ENCODE measurements at regions of chr10 and their contacts with region 1.

Region 1: GRCh38 chr10:13684252-13684791 is 97.6 kb downstream of the PRPF18 start:
- DNase-seq: peak in 1 of 2 donors; percentile 43
- ATAC-seq: peak; percentile 35 to 59
- H3K4me3 ChIP-seq: peak overlapping the region; percentile 6 to 19 (median 12)
- H3K27ac ChIP-seq: peak overlapping the region; percentile 58 to 71 (median 64)
- H3K4me1 ChIP-seq: peaks cover 37 to 40% of the 10 kb centered on the region in 2 donors
- H3K27me3 ChIP-seq: no peaks in the 10 kb centered on the region
- CTCF ChIP-seq: no peak
- POLR2A ChIP-seq: no peak

Region 2: DNA sequence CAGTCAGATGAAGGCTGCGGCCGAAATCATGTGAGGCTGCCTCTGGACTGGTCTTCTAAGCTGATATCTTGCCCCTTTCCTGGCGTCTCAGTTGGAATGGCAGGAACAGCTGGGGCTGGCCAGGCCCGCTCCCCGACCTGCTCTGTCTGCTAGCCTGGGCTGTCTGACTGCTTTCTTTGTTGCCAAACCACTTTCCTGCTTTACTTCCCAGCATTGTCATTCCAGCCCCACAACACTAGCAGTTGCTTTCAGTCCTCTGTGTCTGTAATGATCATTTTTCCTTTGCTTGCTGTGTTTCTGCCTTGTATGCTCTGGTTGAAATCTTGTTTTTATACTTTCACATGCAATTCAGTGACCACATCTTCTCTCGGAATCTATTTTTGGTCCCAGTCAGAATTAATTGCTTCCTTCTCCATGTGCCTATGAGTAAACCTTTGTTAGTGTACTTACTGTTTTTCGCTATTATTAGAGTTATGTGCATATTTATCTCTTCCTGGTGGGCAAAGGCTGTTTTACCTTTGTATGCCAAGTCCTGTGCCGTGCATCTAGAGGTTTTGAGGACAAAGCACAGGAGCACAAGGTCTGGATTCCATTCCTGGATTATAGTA is 76.0 kb before region 1 on chr10:
- in situ Hi-C with region 1: no loop called
- intact Hi-C with region 1: no loop called
- DNase-seq: peak in 1 of 2 donors; percentile 78
- ATAC-seq: peak; percentile 77 to 96
- H3K4me3 ChIP-seq: peak overlapping the region in 2 of 4 donors; percentile 1 to 2
- H3K27ac ChIP-seq: peak overlapping the region; percentile 63 to 83 (median 75)
- H3K4me1 ChIP-seq: peaks cover 16 to 25% of the 10 kb centered on the region in 2 donors
- H3K27me3 ChIP-seq: no peaks in the 10 kb centered on the region
- CTCF ChIP-seq: no peak
- POLR2A ChIP-seq: no peak

Region 3: DNA sequence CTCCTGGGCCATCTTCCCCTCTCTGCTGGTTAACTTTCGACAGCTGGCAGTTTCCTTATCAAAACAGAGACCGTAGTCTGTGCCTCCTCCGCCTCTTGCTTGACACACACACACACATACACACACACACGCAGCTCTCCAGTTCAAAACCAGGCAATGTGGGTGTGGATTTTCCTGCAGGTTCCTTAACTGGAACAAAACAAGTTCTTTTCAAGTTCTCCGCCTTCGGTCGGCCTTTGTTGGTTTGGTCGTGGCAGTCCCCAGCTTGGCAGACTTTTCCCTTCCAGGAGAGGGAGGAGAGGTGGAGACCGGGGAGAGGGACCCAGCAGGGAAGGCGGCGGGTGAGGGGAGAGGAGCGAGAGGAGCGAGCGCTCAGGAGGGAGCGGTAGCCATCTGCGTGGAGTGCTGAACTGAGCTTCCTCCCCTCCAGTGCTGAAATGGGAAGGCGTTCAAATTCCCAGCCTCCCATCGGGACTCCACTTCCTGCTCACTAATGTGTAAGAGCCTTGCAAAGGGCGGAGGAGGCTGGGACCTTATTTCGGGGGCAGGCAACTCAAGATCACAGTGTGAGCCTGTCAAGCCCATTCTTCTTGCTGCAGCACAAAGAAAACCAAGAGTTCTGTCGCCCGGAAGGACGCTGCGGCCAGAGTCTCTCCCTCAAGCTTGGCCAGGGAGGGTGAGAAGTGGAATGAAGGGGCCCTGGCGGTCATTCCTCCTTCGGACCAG is 23.0 kb after region 1 on chr10:
- in situ Hi-C with region 1: no loop called
- intact Hi-C with region 1: loop called (anchors 2 kb)
- DNase-seq: peak; percentile 59 to 71
- ATAC-seq: peak; percentile 83 to 93
- H3K4me3 ChIP-seq: peak overlapping the region; percentile 42 to 53 (median 48)
- H3K27ac ChIP-seq: peak overlapping the region; percentile 36 to 38 (median 37)
- H3K4me1 ChIP-seq: peaks cover 26 to 27% of the 10 kb centered on the region in 2 donors
- H3K27me3 ChIP-seq: no peaks in the 10 kb centered on the region
- CTCF ChIP-seq: no peak
- POLR2A ChIP-seq: no peak